A549 (cell line): ENCODE measurements at regions of chr19 and their contacts with region 1.

Region 1: GRCh38 chr19:43575156-43575950 is at the starts of genes PINLYP and XRCC1:
- DNase-seq: peak; percentile 99 to 100
- ATAC-seq: peak; percentile 98 to 99
- H3K4me3 ChIP-seq: peak within 1 kb of the TSS; percentile 84
- H3K27ac ChIP-seq: peak within 1 kb of the TSS; percentile 91
- H3K4me1 ChIP-seq: peaks cover 11% of the 10 kb centered on the region
- CTCF ChIP-seq: no peak
- EP300 ChIP-seq: no peak
- POLR2A ChIP-seq: peak; percentile 52
- RAD21 ChIP-seq: no peak
- polyA plus RNA-seq, gene PINLYP: 0.12 TPM in 1 of 2 replicates, not detected in the other
- polyA plus RNA-seq, gene XRCC1: 31.9 and 32.0 TPM in 2 replicates

Region 2: GRCh38 chr19:43532962-43533545 is 42.3 kb before region 1 on chr19 and contains the start of gene ZNF575:
- CTCF ChIA-PET with region 1: interaction called, 7 read pairs
- POLR2A ChIA-PET with region 1: interaction called, 12 read pairs
- DNase-seq: peak; percentile 95 to 99
- ATAC-seq: peak; percentile 70 to 83
- H3K4me3 ChIP-seq: peak within 1 kb of the TSS; percentile 57
- H3K27ac ChIP-seq: peak within 1 kb of the TSS; percentile 90 to 93
- H3K4me1 ChIP-seq: peaks cover 14% of the 10 kb centered on the region
- CTCF ChIP-seq: no peak
- EP300 ChIP-seq: no peak
- POLR2A ChIP-seq: peak; percentile 79
- RAD21 ChIP-seq: no peak
- polyA plus RNA-seq, gene ZNF575: 0.09 and 0.38 TPM in 2 replicates

Region 3: DNA sequence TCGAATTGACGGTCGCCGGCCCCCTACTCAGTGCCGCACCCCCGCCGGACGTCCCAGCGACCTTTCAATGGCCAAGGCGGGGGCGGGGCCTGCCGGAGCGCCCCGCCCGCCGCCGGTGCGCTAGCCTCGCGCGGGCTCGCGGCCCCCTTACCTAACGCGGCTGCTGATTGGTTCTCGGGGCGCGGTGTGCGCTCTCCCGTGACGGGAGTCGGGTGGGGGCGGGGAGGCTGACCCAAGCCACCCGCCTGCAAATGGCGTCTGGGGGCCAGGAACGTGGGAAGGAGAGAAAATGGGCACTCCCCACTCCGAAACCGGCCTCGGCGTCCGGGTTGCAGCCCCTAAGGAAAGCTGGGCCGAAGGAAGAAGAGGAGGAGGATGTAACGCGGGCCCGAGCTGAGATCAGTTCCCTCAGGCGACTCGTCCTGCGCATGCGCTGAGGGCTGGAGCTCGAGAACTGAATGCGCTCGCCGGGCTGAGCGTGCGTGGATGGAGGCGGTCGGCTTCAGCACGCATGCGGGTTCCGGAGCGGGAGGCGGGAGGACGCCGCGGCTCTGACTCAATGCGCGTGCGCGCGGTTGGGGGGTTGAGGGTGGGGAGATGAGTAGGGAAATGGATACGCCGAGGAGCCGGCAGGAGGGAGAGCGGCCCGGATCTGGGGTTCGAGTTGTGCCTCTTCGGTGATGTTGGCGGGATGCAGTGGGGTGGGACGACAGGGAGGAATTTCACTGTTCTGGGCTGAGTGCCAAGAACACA is 179.3 kb after region 1 on chr19 and contains the start of gene SMG9:
- CTCF ChIA-PET with region 1: no interaction called
- POLR2A ChIA-PET with region 1: no interaction called
- DNase-seq: peak; percentile 99
- ATAC-seq: peak; percentile 85 to 89
- H3K4me3 ChIP-seq: peak within 1 kb of the TSS; percentile 75
- H3K27ac ChIP-seq: peak within 1 kb of the TSS; percentile 94 to 99
- H3K4me1 ChIP-seq: peaks cover 61% of the 10 kb centered on the region
- CTCF ChIP-seq: no peak
- EP300 ChIP-seq: 0 out of 5 replicates have a peak, but pooled peaks of 1 of the 2 experiments have one; percentile 12
- POLR2A ChIP-seq: peak; percentile 61
- RAD21 ChIP-seq: no peak; a peak in 1 of 5 replicates
- polyA plus RNA-seq, gene SMG9: 14.2 and 24.4 TPM in 2 replicates